SK-N-SH (cell line): ENCODE measurements at regions of chr17 and their contacts with region 1.

Region 1: GRCh38 chr17:73595479-73595878 is 48.8 kb downstream of the SDK2 start:
- DNase-seq: peak; percentile 96
- H3K4me3 ChIP-seq: no peak overlapping the region
- H3K27ac ChIP-seq: no peak overlapping the region
- H3K4me1 ChIP-seq: peaks cover 0 to 36% of the 10 kb centered on the region in 2 experiments; a peak in 1 of 4 replicates
- H3K27me3 ChIP-seq: no peaks in the 10 kb centered on the region
- CTCF ChIP-seq: 0 out of 2 replicates have a peak, but pooled peaks have one; percentile 19
- EP300 ChIP-seq: peak in 1 of 2 experiments; percentile 81; a peak in 2 of 4 replicates
- RAD21 ChIP-seq: peak; percentile 82

Region 2: GRCh38 chr17:73293480-73293911 is 302.0 kb before region 1 on chr17:
- CTCF ChIA-PET with region 1: no interaction called
- POLR2A ChIA-PET with region 1: no interaction called
- DNase-seq: peak; percentile 22
- H3K4me3 ChIP-seq: no peak overlapping the region
- H3K27ac ChIP-seq: peak overlapping the region in 1 of 2 experiments; percentile 88; a peak in 2 of 4 replicates
- H3K4me1 ChIP-seq: peaks cover 33 to 42% of the 10 kb centered on the region in 2 experiments; a peak in 3 of 4 replicates
- H3K27me3 ChIP-seq: no peaks in the 10 kb centered on the region
- CTCF ChIP-seq: no peak
- EP300 ChIP-seq: no peak
- RAD21 ChIP-seq: no peak

Region 3: GRCh38 chr17:73575470-73576221 is 19.8 kb before region 1 on chr17:
- CTCF ChIA-PET with region 1: interaction called, 25 read pairs
- POLR2A ChIA-PET with region 1: no interaction called
- DNase-seq: peak; percentile 71
- H3K4me3 ChIP-seq: no peak overlapping the region
- H3K27ac ChIP-seq: no peak overlapping the region
- H3K4me1 ChIP-seq: peaks cover 0 to 11% of the 10 kb centered on the region in 2 experiments; a peak in 1 of 4 replicates
- H3K27me3 ChIP-seq: no peaks in the 10 kb centered on the region
- CTCF ChIP-seq: no peak
- EP300 ChIP-seq: peak in 1 of 2 experiments; percentile 55; a peak in 1 of 4 replicates
- RAD21 ChIP-seq: no peak

Region 4: GRCh38 chr17:73639932-73640331 is 44.5 kb after region 1 on chr17:
- CTCF ChIA-PET with region 1: interaction called, 30 read pairs
- POLR2A ChIA-PET with region 1: no interaction called
- DNase-seq: no peak
- H3K4me3 ChIP-seq: no peak overlapping the region
- H3K27ac ChIP-seq: no peak overlapping the region
- H3K4me1 ChIP-seq: peaks cover 0 to 14% of the 10 kb centered on the region in 2 experiments; a peak in 1 of 4 replicates
- H3K27me3 ChIP-seq: peaks cover 25% of the 10 kb centered on the region
- CTCF ChIP-seq: no peak
- EP300 ChIP-seq: no peak
- RAD21 ChIP-seq: no peak

Region 5: GRCh38 chr17:73663564-73664160 is 68.2 kb after region 1 on chr17:
- CTCF ChIA-PET with region 1: no interaction called
- POLR2A ChIA-PET with region 1: no interaction called
- DNase-seq: no peak
- H3K4me3 ChIP-seq: no peak overlapping the region
- H3K27ac ChIP-seq: no peak overlapping the region
- H3K4me1 ChIP-seq: no peaks in the 10 kb centered on the region
- H3K27me3 ChIP-seq: no peaks in the 10 kb centered on the region
- CTCF ChIP-seq: no peak
- EP300 ChIP-seq: no peak
- RAD21 ChIP-seq: no peak